ENCODE measurements at regions of chr5 and their contacts with region 1.

Region 1: GRCh38 chr5:177351385-177352329 is at the start of gene LMAN2:
- DNase-seq: peak; percentile 87
- ATAC-seq: peak; percentile 99
- H3K4me3 Mint-ChIP-seq: peak within 1 kb of the TSS; percentile 99
- H3K27ac Mint-ChIP-seq: peak within 1 kb of the TSS; percentile 100
- H3K4me1 Mint-ChIP-seq: peaks cover 52% of the 10 kb centered on the region
- H3K27me3 Mint-ChIP-seq: no peaks in the 10 kb centered on the region
- total RNA-seq, gene LMAN2: 110 to 116 TPM

Region 2: DNA sequence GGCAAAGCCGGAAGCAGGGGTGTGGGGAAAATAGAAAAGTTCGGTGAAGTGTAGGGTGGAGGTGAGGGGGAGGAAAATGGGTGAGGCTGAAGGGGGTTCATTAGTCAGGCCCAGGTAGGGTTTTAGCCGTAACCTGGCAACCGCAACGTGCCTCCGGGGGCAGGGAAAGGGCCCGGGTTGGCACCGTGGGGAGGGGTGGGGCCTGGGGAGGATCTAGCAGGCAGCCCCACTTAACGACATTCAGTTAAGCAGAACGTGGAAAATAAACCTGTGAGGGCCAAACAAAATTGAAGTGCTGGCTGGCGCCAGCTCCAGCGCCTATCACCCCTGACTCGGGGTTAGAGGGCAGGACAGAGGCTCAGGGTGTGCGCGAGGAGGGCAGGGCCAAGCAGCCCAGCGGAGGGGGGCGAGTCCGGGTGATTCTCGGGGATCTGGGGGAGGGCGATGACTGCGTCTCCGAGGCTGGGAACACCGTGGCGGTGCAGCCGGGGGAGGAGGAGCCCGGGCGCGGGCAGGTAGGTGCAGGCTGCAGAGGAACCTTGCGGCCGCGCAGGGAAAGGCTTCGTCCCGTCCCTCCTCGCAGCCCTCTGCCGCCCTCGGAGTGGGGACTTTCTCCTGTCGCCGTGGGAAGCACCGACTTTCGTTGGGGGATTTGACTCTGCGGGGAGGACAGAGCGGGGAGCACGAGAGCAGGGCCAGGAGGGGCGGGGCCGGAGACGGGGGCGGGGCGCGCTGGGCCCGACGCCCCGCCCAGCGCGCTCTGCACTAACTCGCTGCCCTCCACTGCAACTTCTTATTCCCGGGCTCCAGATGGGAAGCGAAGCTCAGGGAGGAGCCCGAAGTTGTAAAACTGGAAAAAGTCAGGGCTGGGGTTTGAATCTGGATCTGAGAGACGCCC is 11.2 kb after region 1 on chr5:
- POLR2A ChIA-PET with region 1: interaction called, 19 read pairs
- DNase-seq: peak; percentile 71
- ATAC-seq: peak; percentile 60
- H3K4me3 Mint-ChIP-seq: peak overlapping the region; percentile 86
- H3K27ac Mint-ChIP-seq: peak overlapping the region; percentile 68
- H3K4me1 Mint-ChIP-seq: peaks cover 43% of the 10 kb centered on the region
- H3K27me3 Mint-ChIP-seq: no peaks in the 10 kb centered on the region

Region 3: DNA sequence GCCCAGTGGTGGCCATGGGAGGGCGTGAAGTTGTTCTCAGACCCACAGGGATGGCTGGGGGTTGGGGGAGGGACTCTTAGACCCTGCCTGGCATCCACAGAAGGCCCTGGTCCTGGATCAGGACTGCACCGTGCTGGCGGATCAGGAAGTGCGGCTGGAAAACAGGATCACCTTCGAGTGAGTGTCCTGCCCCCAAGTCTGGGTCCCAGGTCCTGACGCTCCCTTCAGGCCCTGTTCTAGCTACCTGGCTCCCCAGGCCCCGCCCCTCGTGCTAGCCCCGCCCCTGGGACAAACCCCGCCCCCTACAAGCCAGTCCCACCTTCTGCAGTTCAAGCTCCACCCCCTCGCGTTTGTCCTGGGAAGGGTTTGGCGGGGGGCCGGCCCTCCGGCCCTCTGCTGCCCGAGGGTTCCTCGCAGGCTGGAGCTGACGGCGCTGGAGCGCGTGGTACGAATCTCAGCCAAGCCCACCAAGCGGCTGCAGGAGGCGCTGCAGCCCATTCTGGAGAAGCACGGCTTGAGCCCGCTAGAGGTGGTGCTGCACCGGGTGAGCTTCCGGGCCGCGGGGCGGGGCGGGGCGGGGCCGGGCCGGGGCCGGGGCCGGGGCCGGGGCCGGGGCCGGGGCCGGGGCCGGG is 18.9 kb after region 1 on chr5:
- POLR2A ChIA-PET with region 1: interaction called, 11 read pairs
- DNase-seq: peak; percentile 79
- ATAC-seq: peak; percentile 84
- H3K4me3 Mint-ChIP-seq: peak overlapping the region; percentile 61
- H3K27ac Mint-ChIP-seq: no peak overlapping the region
- H3K4me1 Mint-ChIP-seq: peaks cover 41% of the 10 kb centered on the region
- H3K27me3 Mint-ChIP-seq: no peaks in the 10 kb centered on the region

Region 4: DNA sequence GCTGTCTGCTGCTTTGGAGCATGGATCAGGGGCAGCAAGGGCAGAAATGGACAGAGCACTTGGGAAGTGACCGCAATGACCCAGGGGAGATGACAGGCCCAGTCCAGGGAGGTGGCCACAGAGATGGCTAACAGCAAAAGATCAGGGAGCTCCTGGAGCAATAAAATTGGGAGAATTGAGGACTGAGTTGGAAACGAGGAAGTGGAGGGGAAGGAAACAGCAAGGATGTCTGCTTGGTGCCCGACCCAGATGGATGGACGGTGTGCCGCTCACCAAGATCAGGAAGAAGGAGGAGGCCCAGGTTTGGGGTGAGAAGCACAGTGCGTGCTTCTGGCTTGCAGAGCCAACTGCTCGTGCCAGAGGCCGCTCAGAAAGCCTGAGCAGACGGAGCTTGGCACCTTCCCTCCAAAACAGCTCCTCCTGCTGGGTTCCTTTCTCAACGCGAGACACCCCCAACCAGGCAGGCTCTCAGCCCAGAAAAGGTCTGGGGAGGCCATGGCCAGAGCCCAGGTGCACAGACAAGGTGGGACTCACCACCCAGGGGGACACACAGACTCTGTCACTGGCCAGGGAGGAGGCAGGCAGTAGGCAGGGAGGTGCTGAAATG is 30.9 kb after region 1 on chr5:
- POLR2A ChIA-PET with region 1: no interaction called
- DNase-seq: no peak
- ATAC-seq: peak; percentile 43
- H3K4me3 Mint-ChIP-seq: no peak overlapping the region
- H3K27ac Mint-ChIP-seq: peak overlapping the region; percentile 73
- H3K4me1 Mint-ChIP-seq: peaks cover 22% of the 10 kb centered on the region
- H3K27me3 Mint-ChIP-seq: no peaks in the 10 kb centered on the region

Measured in activated naive CD8-positive, alpha-beta T cell treated with anti-CD3 and anti-CD28 coated beads, Interleukin-2, amount 10 ng/mL, durations not matched to agents 7 days and 5 days (primary cell).